AG04450 (cell line): ENCODE measurements at regions of chr4 and their contacts with region 1.

Region 1: GRCh38 chr4:87150498-87151261 is 69.7 kb downstream of the KLHL8 start:
- DNase-seq: peak; percentile 32
- H3K4me3 ChIP-seq: no peak overlapping the region
- H3K27ac ChIP-seq: no peak overlapping the region
- H3K27me3 ChIP-seq: no peaks in the 10 kb centered on the region
- CTCF ChIP-seq: peak; percentile 84

Region 2: GRCh38 chr4:86961605-86962295 is 188.9 kb before region 1 on chr4:
- CTCF ChIA-PET with region 1: interaction called, 10 read pairs
- POLR2A ChIA-PET with region 1: no interaction called
- DNase-seq: no peak
- H3K4me3 ChIP-seq: no peak overlapping the region
- H3K27ac ChIP-seq: no peak overlapping the region
- H3K27me3 ChIP-seq: no peaks in the 10 kb centered on the region
- CTCF ChIP-seq: no peak

Region 3: GRCh38 chr4:87166296-87166854 is 15.7 kb after region 1 on chr4:
- CTCF ChIA-PET with region 1: interaction called, 40 read pairs
- POLR2A ChIA-PET with region 1: interaction called, 4 read pairs
- DNase-seq: no peak
- H3K4me3 ChIP-seq: no peak overlapping the region
- H3K27ac ChIP-seq: no peak overlapping the region
- H3K27me3 ChIP-seq: no peaks in the 10 kb centered on the region
- CTCF ChIP-seq: no peak

Region 4: GRCh38 chr4:87171944-87172343 is 21.3 kb after region 1 on chr4:
- CTCF ChIA-PET with region 1: interaction called, 19 read pairs
- POLR2A ChIA-PET with region 1: no interaction called
- DNase-seq: no peak
- H3K4me3 ChIP-seq: no peak overlapping the region
- H3K27ac ChIP-seq: no peak overlapping the region
- H3K27me3 ChIP-seq: no peaks in the 10 kb centered on the region
- CTCF ChIP-seq: no peak

Region 5: GRCh38 chr4:87188048-87188447 is 37.4 kb after region 1 on chr4:
- CTCF ChIA-PET with region 1: interaction called, 14 read pairs
- POLR2A ChIA-PET with region 1: no interaction called
- DNase-seq: peak; percentile 16
- H3K4me3 ChIP-seq: no peak overlapping the region
- H3K27ac ChIP-seq: no peak overlapping the region
- H3K27me3 ChIP-seq: no peaks in the 10 kb centered on the region
- CTCF ChIP-seq: no peak

Region 6: GRCh38 chr4:87235020-87235671 is 84.5 kb after region 1 on chr4:
- CTCF ChIA-PET with region 1: interaction called, 109 read pairs
- POLR2A ChIA-PET with region 1: no interaction called
- DNase-seq: no peak
- H3K4me3 ChIP-seq: peak overlapping the region; percentile 57; the same call in 1 of the 2 replicates
- H3K27ac ChIP-seq: no peak overlapping the region
- H3K27me3 ChIP-seq: no peaks in the 10 kb centered on the region
- CTCF ChIP-seq: no peak